MCF 10A (cell line): ENCODE measurements at regions of chr18 and their contacts with region 1.

Region 1: GRCh38 chr18:46324087-46324958 is 220.1 kb downstream of the HAUS1 start:
- DNase-seq: peak; percentile 79
- H3K4me3 Mint-ChIP-seq: peak overlapping the region; percentile 48
- H3K27ac Mint-ChIP-seq: peak overlapping the region; percentile 67
- H3K4me1 Mint-ChIP-seq: peaks cover 36% of the 10 kb centered on the region
- H3K27me3 Mint-ChIP-seq: no peaks in the 10 kb centered on the region
- CTCF ChIP-seq: no peak

Region 2: DNA sequence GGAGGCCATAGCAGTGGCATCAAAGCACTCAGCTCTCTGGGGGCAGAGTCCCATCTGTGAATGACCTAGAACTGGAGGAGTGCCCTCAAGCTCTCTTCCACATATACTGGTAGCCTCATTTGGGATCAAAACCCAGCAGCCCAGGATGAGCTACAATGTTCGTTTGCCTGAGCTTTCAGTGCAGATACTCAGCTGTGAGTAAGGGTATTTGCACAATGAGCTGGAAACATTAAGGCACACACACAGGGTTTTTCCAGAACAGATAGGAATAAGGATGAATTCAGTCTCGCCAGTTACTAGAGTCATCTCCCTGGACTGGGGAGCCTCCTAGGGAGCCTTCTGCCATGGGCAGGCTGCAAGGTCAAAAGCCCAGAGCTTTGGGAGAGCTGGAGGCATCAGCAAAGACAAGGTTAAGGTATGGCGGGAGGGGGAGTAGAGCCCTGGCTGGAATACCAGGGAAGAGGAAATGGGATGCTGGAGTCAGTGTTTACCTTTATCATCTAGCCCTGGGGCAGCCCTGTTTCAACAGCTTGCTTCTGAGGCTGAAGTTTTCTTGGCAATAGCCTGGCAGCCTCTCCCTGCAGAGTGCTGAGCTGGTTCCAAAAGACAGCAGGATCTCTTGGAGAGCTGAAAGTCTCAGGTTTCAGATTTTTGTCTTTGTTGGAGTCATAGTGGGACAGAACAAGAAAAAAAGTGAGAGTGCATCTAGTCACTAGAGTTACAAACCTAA is 145.0 kb after region 1 on chr18:
- CTCF ChIA-PET with region 1: no interaction called
- POLR2A ChIA-PET with region 1: no interaction called
- intact Hi-C with region 1: no loop called
- DNase-seq: peak; percentile 88
- H3K4me3 Mint-ChIP-seq: no peak overlapping the region
- H3K27ac Mint-ChIP-seq: no peak overlapping the region
- H3K4me1 Mint-ChIP-seq: peaks cover 6% of the 10 kb centered on the region
- H3K27me3 Mint-ChIP-seq: peaks cover 12% of the 10 kb centered on the region
- CTCF ChIP-seq: no peak

Region 3: GRCh38 chr18:46536215-46536874 is 212.0 kb after region 1 on chr18:
- CTCF ChIA-PET with region 1: no interaction called
- POLR2A ChIA-PET with region 1: no interaction called
- intact Hi-C with region 1: loop called (anchors 5 kb)
- DNase-seq: peak; percentile 55
- H3K4me3 Mint-ChIP-seq: no peak overlapping the region
- H3K27ac Mint-ChIP-seq: no peak overlapping the region
- H3K4me1 Mint-ChIP-seq: peaks cover 11% of the 10 kb centered on the region
- H3K27me3 Mint-ChIP-seq: peaks cover 32% of the 10 kb centered on the region
- CTCF ChIP-seq: no peak

Region 4: DNA sequence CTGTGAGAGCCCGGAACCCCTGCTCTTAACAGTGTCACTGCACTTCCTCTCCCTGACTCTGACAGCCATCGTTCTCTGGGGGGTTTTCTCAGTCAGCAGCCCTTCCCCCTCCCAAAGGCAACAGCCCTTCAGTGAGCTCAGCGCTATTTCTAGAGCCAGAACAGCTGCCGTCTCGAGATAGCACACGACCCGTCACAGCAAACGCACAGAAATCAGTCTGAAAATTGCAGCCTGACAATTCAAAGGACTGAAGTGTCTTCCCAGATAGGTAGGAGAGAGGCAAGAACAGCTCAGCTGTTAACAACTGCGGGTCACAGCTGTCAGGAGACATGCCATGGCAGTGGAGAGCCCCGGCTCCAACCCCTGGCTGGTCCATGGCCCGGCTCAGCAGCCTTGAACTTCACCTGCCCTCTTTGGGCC is 387.1 kb after region 1 on chr18:
- CTCF ChIA-PET with region 1: no interaction called
- POLR2A ChIA-PET with region 1: no interaction called
- intact Hi-C with region 1: no loop called
- DNase-seq: no peak
- H3K4me3 Mint-ChIP-seq: no peak overlapping the region
- H3K27ac Mint-ChIP-seq: no peak overlapping the region
- H3K4me1 Mint-ChIP-seq: peaks cover 6% of the 10 kb centered on the region
- H3K27me3 Mint-ChIP-seq: peaks cover 11% of the 10 kb centered on the region
- CTCF ChIP-seq: no peak